OCI-LY7 (cell line): ENCODE measurements at regions of chr13 and their contacts with region 1.

Region 1: DNA sequence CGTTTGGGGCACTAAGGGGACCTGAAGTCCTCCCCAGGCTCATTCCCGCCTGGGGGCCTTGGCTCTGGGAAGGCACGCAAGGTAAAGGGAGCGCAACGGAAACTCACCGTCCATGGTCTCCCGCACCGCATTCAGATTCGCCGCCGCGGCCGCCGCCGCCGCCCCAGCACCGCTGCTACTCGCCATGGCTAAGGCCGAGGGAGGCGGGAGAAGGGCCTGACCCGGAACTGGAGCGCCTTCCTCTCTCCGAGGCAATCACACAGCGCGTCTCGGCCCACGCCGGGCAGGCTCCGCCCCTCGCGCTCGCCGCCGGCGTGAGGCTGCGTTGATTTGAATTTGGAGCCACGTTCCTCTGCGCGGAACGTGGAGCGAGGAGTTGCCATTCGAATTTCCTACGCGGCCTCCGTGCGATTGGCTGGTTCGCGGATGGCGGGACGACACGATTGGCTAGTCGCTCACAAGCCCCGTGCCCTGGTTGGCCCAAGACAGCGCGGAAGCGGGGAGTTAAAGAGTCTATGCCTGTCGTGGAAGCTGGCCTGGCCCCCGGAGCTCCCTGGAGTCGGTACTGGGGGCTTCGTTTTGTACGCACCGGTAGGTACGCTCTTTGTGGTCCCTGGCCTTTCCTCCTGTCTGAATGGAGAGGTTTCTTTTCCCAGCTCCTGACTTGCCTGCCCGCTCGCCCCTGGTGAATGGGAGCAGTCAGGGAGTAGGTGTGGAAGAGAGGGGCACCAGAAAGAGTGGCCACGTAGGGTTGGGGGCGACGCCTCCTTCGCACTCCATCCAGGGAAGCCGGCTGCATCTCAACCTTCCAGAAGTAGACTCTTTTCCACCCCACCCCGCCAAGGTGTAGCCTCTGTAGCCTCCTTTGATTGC is at the starts of genes BORA and MZT1:
- DNase-seq: peak; percentile 97
- H3K4me3 ChIP-seq: peak within 1 kb of the TSS; percentile 100
- H3K27ac ChIP-seq: peak within 1 kb of the TSS; percentile 76
- H3K4me1 ChIP-seq: peaks cover 37% of the 10 kb centered on the region
- CTCF ChIP-seq: no peak
- total RNA-seq, gene BORA: 28.3 and 28.6 TPM in 2 replicates
- total RNA-seq, gene MZT1: 28.3 and 43.3 TPM in 2 replicates

Region 2: DNA sequence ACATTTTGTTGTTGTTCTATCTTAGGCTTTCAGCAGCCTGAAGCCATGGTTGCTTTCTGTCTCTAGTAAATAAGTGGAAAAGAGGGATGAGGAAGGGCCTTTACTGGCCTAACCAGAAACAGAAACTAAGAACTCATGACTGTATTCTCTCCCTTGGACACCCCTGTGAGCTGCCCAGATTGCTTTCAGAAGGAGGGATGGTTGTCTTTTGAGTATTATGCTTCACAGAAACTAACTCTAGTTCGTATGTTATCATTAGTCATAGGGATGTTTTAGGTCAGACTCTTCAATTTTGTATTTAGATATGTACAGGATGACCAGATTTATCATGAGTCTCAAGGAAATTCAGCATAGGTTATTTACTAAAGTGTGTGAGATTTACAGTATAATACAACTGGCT is 17.6 kb after region 1 on chr13:
- CTCF ChIA-PET with region 1: no interaction called
- POLR2A ChIA-PET with region 1: interaction called, 12 read pairs
- intact Hi-C with region 1: no loop called
- DNase-seq: no peak
- H3K4me3 ChIP-seq: no peak overlapping the region
- H3K27ac ChIP-seq: no peak overlapping the region
- H3K4me1 ChIP-seq: no peaks in the 10 kb centered on the region
- CTCF ChIP-seq: no peak

Region 3: GRCh38 chr13:72781451-72782439 is 54.1 kb after region 1 on chr13 and contains the starts of genes DIS3 and PIBF1:
- CTCF ChIA-PET with region 1: no interaction called
- POLR2A ChIA-PET with region 1: interaction called, 6 read pairs
- intact Hi-C with region 1: loop called (anchors 2 kb)
- DNase-seq: peak; percentile 97
- H3K4me3 ChIP-seq: peak within 1 kb of the TSS; percentile 97
- H3K27ac ChIP-seq: peak within 1 kb of the TSS; percentile 77
- H3K4me1 ChIP-seq: peaks cover 54% of the 10 kb centered on the region
- CTCF ChIP-seq: 0 out of 2 replicates have a peak, but pooled peaks have one; percentile 22
- total RNA-seq, gene DIS3: 30.6 and 36.0 TPM in 2 replicates
- total RNA-seq, gene PIBF1: 23.2 and 27.6 TPM in 2 replicates

Region 4: DNA sequence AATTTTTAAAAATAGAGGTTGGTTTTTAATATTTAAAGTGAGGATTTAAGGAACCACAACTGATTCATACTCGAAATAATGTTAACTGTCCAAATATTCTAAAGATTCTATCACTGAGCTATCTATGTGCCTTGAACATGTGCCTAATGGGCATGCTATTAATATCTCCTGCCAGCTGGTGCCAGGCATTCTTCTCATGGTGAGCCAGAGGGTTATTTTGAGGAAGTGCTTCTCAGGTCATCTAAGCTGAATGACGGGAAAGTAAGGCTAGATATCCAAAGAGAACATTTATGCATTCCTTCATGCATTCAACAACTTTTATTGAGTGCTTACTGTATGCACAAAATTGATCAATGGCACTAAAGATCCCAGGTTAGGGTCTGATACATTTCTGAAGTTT is 192.4 kb after region 1 on chr13:
- CTCF ChIA-PET with region 1: no interaction called
- POLR2A ChIA-PET with region 1: no interaction called
- intact Hi-C with region 1: no loop called
- DNase-seq: no peak
- H3K4me3 ChIP-seq: no peak overlapping the region
- H3K27ac ChIP-seq: no peak overlapping the region
- H3K4me1 ChIP-seq: no peaks in the 10 kb centered on the region
- CTCF ChIP-seq: no peak

Region 5: GRCh38 chr13:73025217-73026012 is 297.8 kb after region 1 on chr13:
- CTCF ChIA-PET with region 1: no interaction called
- POLR2A ChIA-PET with region 1: no interaction called
- intact Hi-C with region 1: no loop called
- DNase-seq: no peak
- H3K4me3 ChIP-seq: no peak overlapping the region
- H3K27ac ChIP-seq: no peak overlapping the region
- H3K4me1 ChIP-seq: no peaks in the 10 kb centered on the region
- CTCF ChIP-seq: no peak